Common myeloid progenitor, CD34-positive (primary cell): ENCODE measurements at regions of chr20 and their contacts with region 1.

Region 1: GRCh38 chr20:47379433-47380150 is 23.1 kb upstream of the ZMYND8 start:
- DNase-seq: no peak
- H3K4me3 ChIP-seq: no peak overlapping the region
- H3K27ac ChIP-seq: no peak overlapping the region
- H3K4me1 ChIP-seq: peaks cover 0 to 8% (median 1%) of the 10 kb centered on the region in 4 experiments
- H3K27me3 ChIP-seq: no peaks in the 10 kb centered on the region

Region 2: GRCh38 chr20:47146703-47147102 is 232.9 kb before region 1 on chr20:
- CTCF ChIA-PET with region 1: no interaction called
- POLR2A ChIA-PET with region 1: no interaction called
- DNase-seq: no peak
- H3K4me3 ChIP-seq: no peak overlapping the region
- H3K27ac ChIP-seq: no peak overlapping the region
- H3K4me1 ChIP-seq: peaks cover 0 to 3% (median 0%) of the 10 kb centered on the region in 4 experiments
- H3K27me3 ChIP-seq: peaks cover 0 to 4% (median 0%) of the 10 kb centered on the region in 5 experiments

Region 3: GRCh38 chr20:47258745-47259695 is 120.6 kb before region 1 on chr20:
- CTCF ChIA-PET with region 1: interaction called, 13 read pairs
- POLR2A ChIA-PET with region 1: no interaction called
- DNase-seq: peak in 2 of 3 donors; percentile 58 to 69
- H3K4me3 ChIP-seq: no peak overlapping the region
- H3K27ac ChIP-seq: peak overlapping the region; percentile 27 to 69
- H3K4me1 ChIP-seq: peaks cover 0 to 20% (median 12%) of the 10 kb centered on the region in 4 experiments
- H3K27me3 ChIP-seq: no peaks in the 10 kb centered on the region

Region 4: GRCh38 chr20:47290008-47290407 is 89.6 kb before region 1 on chr20:
- CTCF ChIA-PET with region 1: interaction called, 37 read pairs
- POLR2A ChIA-PET with region 1: no interaction called
- DNase-seq: no peak
- H3K4me3 ChIP-seq: no peak overlapping the region
- H3K27ac ChIP-seq: no peak overlapping the region
- H3K4me1 ChIP-seq: no peaks in the 10 kb centered on the region
- H3K27me3 ChIP-seq: no peaks in the 10 kb centered on the region

Region 5: DNA sequence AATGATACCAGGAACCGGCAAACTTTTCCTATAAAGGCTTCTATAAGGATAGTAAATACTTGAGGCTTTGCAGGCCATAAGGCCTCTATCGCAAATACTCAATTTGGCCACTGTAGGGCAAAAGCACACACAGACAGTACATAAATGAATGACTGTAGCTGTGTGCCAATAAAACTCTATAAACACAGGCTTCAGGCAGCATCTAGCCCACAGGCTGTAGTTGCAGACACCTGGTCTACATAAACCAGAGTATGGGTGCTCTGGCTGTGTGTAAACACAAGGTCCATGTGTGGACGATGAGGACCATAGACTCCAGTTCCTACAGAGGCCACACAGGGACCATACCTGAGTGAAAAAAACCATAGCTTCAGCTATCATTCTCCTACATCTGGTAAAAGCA is 75.3 kb before region 1 on chr20:
- CTCF ChIA-PET with region 1: interaction called, 31 read pairs
- POLR2A ChIA-PET with region 1: no interaction called
- DNase-seq: peak in 2 of 3 donors; percentile 31 to 44
- H3K4me3 ChIP-seq: no peak overlapping the region
- H3K27ac ChIP-seq: peak overlapping the region; percentile 29 to 70
- H3K4me1 ChIP-seq: peaks cover 0 to 26% (median 11%) of the 10 kb centered on the region in 4 experiments
- H3K27me3 ChIP-seq: no peaks in the 10 kb centered on the region

Region 6: DNA sequence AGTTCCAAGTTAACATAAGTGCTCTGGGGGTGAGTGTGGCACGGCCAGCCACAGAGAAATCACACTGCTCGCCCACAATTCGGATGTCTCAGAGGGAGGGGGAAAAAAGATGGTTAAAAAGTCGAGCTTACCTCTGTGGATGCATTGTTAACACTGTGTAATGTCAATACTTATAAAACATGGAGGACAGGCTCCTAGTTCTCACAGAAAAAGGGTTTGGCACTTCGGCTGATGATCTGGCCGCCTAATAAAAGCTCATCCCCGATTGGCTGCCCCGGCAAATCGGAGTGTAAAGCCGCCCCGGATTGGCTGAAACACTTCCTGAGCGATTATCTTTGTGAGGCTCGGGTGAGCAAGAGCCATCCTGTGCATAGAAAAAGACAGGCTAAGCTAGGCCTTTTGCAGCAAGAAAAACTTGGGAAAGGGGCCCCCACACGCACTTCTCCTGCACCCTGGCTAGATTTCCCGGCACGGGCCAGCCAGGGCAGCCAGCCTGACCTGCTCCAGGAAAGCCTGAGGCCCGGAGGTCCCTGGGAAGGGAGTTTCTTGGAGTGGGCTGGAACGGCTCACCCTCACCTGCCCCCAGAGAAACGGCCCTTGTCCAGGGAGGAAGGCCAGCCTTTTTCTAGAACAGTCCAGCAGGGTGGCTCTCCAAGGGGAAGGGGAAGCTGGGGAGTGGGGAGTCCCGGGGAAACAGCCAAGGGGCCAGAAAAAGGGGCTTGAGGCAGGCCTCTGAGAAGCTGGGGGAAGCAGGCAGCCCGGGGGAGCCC is 22.9 kb before region 1 on chr20 and contains the start of gene ZMYND8:
- CTCF ChIA-PET with region 1: interaction called, 76 read pairs
- POLR2A ChIA-PET with region 1: interaction called, 3 read pairs
- DNase-seq: peak; percentile 89 to 94 (median 94)
- H3K4me3 ChIP-seq: peak within 1 kb of the TSS in 6 of 7 experiments; percentile 48 to 77 (median 66)
- H3K27ac ChIP-seq: peak within 1 kb of the TSS; percentile 92 to 97
- H3K4me1 ChIP-seq: peaks cover 59 to 100% (median 97%) of the 10 kb centered on the region in 4 experiments
- H3K27me3 ChIP-seq: no peaks in the 10 kb centered on the region

Region 7: DNA sequence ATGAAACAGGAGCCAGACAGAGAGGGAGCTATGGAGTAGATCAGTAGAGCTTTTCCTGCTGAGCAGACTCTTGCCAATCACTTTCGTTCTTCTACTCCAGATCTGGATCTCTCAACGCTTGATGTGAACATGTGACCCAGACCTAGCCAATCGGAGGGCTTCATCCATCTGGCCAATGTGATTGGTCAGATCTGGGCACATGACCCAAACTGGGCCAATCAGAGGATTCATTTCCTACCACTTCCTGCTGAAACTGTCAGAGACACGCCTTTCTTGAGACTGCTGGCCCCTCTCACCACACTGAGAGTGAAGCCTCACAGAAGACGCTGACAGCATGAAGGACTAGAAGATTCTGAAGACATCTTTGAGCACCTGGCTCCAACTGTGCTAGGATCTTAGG is 21.1 kb after region 1 on chr20:
- CTCF ChIA-PET with region 1: interaction called, 10 read pairs
- POLR2A ChIA-PET with region 1: no interaction called
- DNase-seq: no peak
- H3K4me3 ChIP-seq: no peak overlapping the region
- H3K27ac ChIP-seq: no peak overlapping the region
- H3K4me1 ChIP-seq: peaks cover 0 to 7% (median 2%) of the 10 kb centered on the region in 4 experiments
- H3K27me3 ChIP-seq: no peaks in the 10 kb centered on the region

Region 8: DNA sequence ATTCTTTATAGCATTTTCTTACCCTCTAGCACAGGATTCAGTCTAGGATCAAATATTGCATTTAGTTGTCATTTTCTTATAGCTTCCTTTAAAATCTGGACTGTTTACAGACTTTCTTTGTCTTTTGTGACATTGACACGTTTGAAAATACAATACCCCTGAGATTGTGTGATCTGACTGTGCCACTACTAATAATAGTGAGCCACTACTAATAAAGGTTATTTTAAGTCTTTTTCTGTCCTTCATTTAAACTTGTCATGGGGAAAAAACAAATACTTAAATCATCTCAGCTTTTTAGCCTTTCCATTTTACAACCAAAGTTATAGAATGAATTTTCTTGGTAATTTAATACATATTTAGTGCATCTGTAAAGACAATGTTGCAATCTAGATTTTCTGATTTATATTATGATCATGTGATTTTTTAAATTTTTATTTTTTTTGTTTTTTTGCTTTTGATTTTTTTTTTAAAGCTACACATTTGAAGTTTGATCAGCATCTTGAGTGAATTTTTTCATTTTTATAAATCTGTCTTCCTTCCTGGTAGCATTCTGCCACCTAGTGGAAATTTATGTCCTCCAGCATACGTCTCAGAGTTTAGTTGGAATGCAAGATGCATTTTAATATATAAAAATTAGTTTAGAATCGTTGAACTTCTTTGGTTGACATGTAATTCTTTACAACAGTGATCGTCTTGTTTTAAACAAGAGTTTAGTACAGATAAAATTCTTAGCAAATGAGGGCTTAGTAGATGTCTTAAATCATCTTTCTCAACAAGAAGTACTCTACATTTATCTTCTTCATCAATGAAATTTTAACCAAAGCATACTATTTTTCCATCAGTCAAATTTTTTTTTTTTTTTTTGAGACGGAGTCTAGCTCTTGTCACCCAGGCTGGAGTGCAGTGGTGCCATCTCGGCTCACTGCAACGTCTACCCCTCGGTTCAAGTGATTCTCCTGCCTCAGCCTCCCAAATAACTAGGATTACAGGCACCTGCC is 241.5 kb after region 1 on chr20:
- CTCF ChIA-PET with region 1: interaction called, 19 read pairs
- POLR2A ChIA-PET with region 1: no interaction called
- DNase-seq: peak; percentile 72 to 86 (median 85)
- H3K4me3 ChIP-seq: no peak overlapping the region
- H3K27ac ChIP-seq: no peak overlapping the region
- H3K4me1 ChIP-seq: no peaks in the 10 kb centered on the region
- H3K27me3 ChIP-seq: no peaks in the 10 kb centered on the region